ENCODE measurements at regions of chr20 and their contacts with region 1.

Region 1: GRCh38 chr20:45368221-45368980 is 5.4 kb downstream of the SYS1 start:
- DNase-seq: peak; percentile 53
- H3K4me3 ChIP-seq: no peak overlapping the region
- H3K27ac ChIP-seq: peak overlapping the region in 3 of 4 donors; percentile 2 to 44 (median 8)
- H3K4me1 ChIP-seq: peaks cover 19 to 49% (median 26%) of the 10 kb centered on the region in 4 donors
- H3K27me3 ChIP-seq: no peaks in the 10 kb centered on the region
- CTCF ChIP-seq: no peak
- EP300 ChIP-seq: no peak
- POLR2A ChIP-seq: no peak

Region 2: GRCh38 chr20:45415774-45416637 is 47.6 kb after region 1 on chr20 and contains the start of gene PIGT:
- in situ Hi-C with region 1: loop called in 1 of 4 experiments (anchors 5 kb)
- intact Hi-C with region 1: no loop called
- DNase-seq: peak; percentile 90
- H3K4me3 ChIP-seq: peak within 1 kb of the TSS; percentile 53 to 94 (median 87)
- H3K27ac ChIP-seq: peak within 1 kb of the TSS; percentile 80 to 93 (median 88)
- H3K4me1 ChIP-seq: peaks cover 28 to 64% (median 51%) of the 10 kb centered on the region in 4 donors
- H3K27me3 ChIP-seq: no peaks in the 10 kb centered on the region
- CTCF ChIP-seq: peak in 1 of 5 experiments; percentile 9
- EP300 ChIP-seq: no peak
- POLR2A ChIP-seq: peak; percentile 97
- total RNA-seq, gene PIGT: 88.3 to 321 (median 108) TPM

Measured in transverse colon (tissue), 4 donors.